K562 (cell line): ENCODE measurements at regions of chr2 and their contacts with region 1.

Region 1: DNA sequence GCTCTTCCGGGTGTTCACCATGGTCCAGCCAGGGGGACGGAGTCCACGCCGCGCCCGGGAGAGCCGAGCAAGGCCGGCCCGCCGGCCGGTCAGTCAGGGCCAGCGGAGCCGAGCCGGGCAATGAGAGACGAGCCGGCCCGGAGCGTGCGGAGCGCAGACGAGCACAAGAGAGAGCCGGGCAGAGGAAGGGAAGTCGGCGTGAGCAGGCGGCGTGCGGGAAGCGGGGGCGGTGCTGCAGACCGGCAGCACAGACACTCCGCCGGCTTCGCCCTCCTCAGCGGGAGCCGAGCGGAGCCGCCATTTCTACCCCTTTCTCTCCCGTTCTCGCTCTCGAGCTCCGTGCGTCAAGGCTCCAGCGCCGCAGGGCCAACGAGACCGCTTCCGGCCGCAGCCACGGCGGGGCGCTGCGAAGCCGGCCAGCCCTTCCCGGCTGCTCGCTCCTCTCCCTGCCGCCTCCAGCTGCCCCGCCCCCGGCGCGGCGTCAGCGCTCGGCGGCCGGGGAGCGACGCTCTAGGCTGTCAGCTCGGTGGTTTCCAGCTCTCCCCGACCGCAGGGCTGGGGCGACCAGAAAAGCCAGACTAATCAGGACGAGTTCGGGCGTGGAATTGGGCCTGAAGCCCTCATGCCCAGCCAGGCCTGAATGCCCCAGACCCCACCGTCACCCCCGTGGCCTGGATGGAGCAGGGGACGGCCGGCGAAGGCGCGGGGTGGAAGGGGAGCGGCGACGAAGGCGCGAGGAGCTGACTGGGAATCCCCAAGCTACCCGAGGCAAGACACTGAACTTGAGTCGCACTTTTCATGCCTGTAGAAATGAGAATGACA is at the start of gene ATAD2B:
- DNase-seq: peak; percentile 94 to 96 (median 94)
- ATAC-seq: peak; percentile 92
- H3K4me3 ChIP-seq: peak within 1 kb of the TSS; percentile 86
- H3K27ac ChIP-seq: peak within 1 kb of the TSS; percentile 96
- H3K4me1 ChIP-seq: peaks cover 3 to 21% of the 10 kb centered on the region in 2 experiments; a peak in 2 of 5 replicates
- H3K27me3 ChIP-seq: no peaks in the 10 kb centered on the region
- CTCF ChIP-seq: peak; percentile 92 to 96 (median 95)
- EP300 ChIP-seq: peak; percentile 37
- POLR2A ChIP-seq: peak; percentile 91
- RAD21 ChIP-seq: peak; percentile 85 to 86
- polyA plus RNA-seq, gene ATAD2B: 3.2 to 4.0 TPM

Region 2: GRCh38 chr2:23824777-23825212 is 102.2 kb before region 1 on chr2:
- CTCF ChIA-PET with region 1: interaction called, 3 read pairs
- POLR2A ChIA-PET with region 1: interaction called, 4 read pairs
- in situ Hi-C with region 1: no loop called
- intact Hi-C with region 1: loop called (anchors 5 kb)
- DNase-seq: peak; percentile 23 to 62 (median 34)
- ATAC-seq: peak; percentile 86
- H3K4me3 ChIP-seq: no peak overlapping the region
- H3K27ac ChIP-seq: no peak overlapping the region
- H3K4me1 ChIP-seq: no peaks in the 10 kb centered on the region
- H3K27me3 ChIP-seq: no peaks in the 10 kb centered on the region
- CTCF ChIP-seq: peak; percentile 54 to 80 (median 71); a peak in 5 of 6 replicates
- EP300 ChIP-seq: no peak
- POLR2A ChIP-seq: no peak
- RAD21 ChIP-seq: peak; percentile 46 to 66

Region 3: DNA sequence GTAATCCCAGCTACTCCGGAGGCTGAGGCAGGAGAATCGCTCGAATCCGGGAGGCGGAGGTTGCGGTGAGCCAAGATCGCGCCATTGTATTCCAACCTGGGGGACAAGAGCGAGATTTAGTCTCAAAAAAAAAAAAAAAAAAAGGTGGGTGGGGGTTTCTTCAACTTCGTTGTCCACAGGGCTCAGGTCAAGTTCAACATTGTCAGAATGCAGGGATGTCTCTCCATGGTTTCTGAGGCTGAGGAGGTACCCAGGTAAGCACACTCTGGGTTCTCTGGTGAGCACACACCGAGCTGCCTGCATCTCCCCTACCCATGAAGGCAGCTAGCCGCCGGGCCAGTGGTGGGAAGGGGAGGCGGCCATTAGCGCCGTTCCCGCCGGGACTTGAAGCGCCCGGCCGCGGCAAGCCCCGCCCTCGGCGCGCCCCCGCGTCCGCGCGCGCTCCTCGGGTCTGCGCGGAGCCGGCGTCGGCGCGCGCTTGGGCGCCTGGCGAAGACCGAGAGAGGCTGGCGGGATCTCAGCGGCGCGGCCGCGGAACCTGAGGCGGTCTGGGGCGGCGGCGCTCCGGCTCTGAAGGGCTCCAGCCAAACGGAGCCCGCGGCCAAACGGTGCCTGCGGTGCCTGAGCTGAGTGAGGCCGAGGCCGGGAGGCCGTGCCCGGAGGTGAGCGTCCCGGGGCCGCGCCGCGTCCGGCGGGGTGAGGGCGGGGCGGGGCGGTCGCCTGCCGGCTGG is 13.2 kb after region 1 on chr2 and contains the start of gene UBXN2A:
- CTCF ChIA-PET with region 1: no interaction called
- POLR2A ChIA-PET with region 1: interaction called, 54 read pairs
- in situ Hi-C with region 1: no loop called
- intact Hi-C with region 1: loop called (anchors 1 kb)
- DNase-seq: peak; percentile 87 to 90 (median 88)
- ATAC-seq: peak; percentile 83
- H3K4me3 ChIP-seq: peak within 1 kb of the TSS; percentile 88
- H3K27ac ChIP-seq: peak within 1 kb of the TSS; percentile 93
- H3K4me1 ChIP-seq: peaks cover 11 to 28% of the 10 kb centered on the region in 2 experiments; a peak in 4 of 5 replicates
- H3K27me3 ChIP-seq: no peaks in the 10 kb centered on the region
- CTCF ChIP-seq: no peak
- EP300 ChIP-seq: no peak
- POLR2A ChIP-seq: peak; percentile 83
- RAD21 ChIP-seq: no peak
- polyA plus RNA-seq, gene UBXN2A: 3.4 to 4.1 TPM

Region 4: DNA sequence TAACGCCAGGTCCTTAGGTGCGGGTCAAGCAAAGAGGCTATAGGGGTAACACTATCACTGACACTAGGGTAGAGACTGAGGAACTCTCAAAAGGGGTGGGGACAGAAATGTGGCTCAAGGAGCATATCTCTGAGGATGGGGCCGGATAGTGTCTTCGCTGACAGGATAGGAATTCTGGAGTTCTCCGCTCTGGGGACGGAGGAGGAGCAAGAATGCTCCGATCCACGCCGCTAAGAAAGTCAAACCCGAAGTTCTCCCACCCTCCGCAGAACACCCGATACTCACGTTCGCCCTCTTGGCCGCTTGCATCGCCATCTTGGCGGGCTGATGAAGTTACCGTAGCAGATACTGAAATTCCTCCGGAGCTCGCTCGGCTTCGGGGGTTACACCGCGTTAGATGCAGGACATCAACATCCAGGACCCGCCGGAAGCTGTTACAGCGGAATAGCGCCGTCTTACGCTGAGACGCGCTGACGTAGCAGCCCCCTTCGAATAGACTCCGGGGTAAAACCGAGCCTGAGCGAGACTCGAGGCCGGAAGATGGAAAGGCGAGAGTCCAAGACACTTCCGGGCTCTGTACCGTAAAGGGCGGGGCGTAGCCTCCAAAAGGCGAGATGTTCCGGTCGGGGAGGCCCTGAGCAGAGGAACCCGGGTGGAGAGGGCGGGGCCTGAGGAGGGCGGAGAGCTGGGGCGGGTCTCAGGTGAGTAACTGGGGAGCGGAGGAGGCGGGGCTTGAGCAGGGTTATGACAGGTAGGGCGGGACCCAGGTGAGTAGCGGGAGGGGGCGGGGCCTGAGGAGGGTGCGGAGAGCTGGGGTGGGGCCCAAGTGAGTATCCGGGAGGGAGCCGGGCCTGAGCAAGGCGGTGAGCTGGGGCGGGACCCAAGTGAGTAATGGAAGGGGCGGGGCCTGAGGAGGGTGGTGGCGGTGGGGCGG is 149.2 kb after region 1 on chr2 and contains the start of gene SF3B6:
- CTCF ChIA-PET with region 1: no interaction called
- POLR2A ChIA-PET with region 1: interaction called, 11 read pairs
- in situ Hi-C with region 1: no loop called
- intact Hi-C with region 1: loop called (anchors 2 kb)
- DNase-seq: peak; percentile 94 to 100 (median 96)
- ATAC-seq: peak; percentile 94
- H3K4me3 ChIP-seq: peak within 1 kb of the TSS; percentile 58
- H3K27ac ChIP-seq: peak within 1 kb of the TSS; percentile 75
- H3K4me1 ChIP-seq: peaks cover 9 to 15% of the 10 kb centered on the region in 2 experiments; a peak in 4 of 5 replicates
- H3K27me3 ChIP-seq: no peaks in the 10 kb centered on the region
- CTCF ChIP-seq: peak in 1 of 3 experiments; percentile 14; a peak in 1 of 6 replicates
- EP300 ChIP-seq: peak; percentile 79
- POLR2A ChIP-seq: peak; percentile 94
- RAD21 ChIP-seq: no peak
- polyA plus RNA-seq, gene SF3B6: 535 to 591 TPM

Region 5: DNA sequence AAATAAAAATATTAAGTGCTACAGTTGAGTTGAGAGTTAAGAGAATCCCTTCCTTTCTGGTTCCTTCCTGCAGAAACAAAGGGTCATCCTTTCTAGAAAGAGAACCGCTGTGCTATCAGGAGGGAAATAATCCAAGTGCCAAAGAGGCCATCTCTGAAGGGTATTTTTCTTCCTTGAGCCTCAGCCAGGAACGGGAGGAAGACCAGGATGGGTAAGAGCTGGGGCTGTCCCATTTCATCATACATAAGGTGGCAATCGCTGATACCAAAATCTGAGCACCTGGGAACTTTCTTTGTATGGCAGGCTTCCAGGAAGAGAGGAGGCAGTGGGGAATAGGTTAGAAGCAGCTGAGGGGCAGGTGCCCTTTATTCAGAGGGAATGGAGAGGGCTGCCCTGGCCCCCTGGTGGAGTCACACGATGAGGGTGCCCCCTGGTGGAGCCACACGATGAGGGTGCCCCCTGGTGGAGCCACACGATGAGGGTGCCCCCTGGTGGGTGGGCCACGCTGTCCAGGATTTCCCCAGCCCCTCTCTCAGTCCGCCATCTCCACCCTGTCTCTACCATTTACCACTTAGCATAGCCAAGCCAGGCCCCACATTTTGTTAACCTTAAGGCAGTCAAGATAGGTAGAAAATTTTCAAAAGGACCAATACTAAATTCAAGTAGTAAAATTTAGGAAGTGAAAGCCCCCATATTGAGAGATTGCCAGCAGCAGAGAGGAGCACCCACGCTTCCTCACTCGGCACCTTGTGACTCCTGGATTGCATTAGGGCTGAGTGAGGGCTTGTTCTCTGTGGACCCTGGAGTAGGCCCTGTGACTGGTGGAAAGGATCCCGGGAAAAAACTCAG is 237.4 kb after region 1 on chr2:
- CTCF ChIA-PET with region 1: interaction called, 7 read pairs
- POLR2A ChIA-PET with region 1: interaction called, 4 read pairs
- in situ Hi-C with region 1: no loop called
- intact Hi-C with region 1: loop called (anchors 1 kb)
- DNase-seq: peak; percentile 58 to 78 (median 69)
- ATAC-seq: peak; percentile 97
- H3K4me3 ChIP-seq: no peak overlapping the region
- H3K27ac ChIP-seq: no peak overlapping the region
- H3K4me1 ChIP-seq: peaks cover 0 to 4% of the 10 kb centered on the region in 2 experiments; a peak in 1 of 5 replicates
- H3K27me3 ChIP-seq: peaks cover 2 to 16% of the 10 kb centered on the region in 2 experiments; a peak in 1 of 5 replicates
- CTCF ChIP-seq: peak; percentile 98 to 99 (median 99)
- EP300 ChIP-seq: no peak; the same call in 1 of the 2 replicates
- POLR2A ChIP-seq: no peak
- RAD21 ChIP-seq: peak; percentile 72 to 91

Region 6: DNA sequence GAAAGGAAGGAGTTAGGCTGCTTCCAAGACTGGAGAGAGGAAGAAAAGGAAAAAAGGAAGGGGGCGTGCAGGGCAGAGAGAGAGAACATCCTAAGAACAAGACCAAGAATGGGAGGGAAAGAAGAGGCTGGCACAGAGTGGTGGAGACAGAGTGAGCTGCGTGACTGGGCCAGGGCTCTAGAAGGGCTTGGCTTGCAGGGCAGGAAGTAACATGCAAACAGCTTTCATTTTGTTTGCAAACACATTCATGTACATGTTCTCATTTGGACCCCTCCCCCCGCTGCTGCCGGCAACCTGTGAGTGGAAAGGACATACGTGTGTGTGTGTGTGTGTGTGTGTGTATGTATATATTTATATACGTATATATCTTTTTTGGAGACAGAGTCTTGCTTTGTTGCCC is 1461.5 kb after region 1 on chr2:
- CTCF ChIA-PET with region 1: no interaction called
- POLR2A ChIA-PET with region 1: no interaction called
- in situ Hi-C with region 1: no loop called
- intact Hi-C with region 1: no loop called
- DNase-seq: no peak
- ATAC-seq: no peak
- H3K4me3 ChIP-seq: no peak overlapping the region
- H3K27ac ChIP-seq: no peak overlapping the region
- H3K4me1 ChIP-seq: no peaks in the 10 kb centered on the region
- H3K27me3 ChIP-seq: peaks cover 35 to 54% of the 10 kb centered on the region in 2 experiments
- CTCF ChIP-seq: no peak
- EP300 ChIP-seq: no peak
- POLR2A ChIP-seq: no peak
- RAD21 ChIP-seq: no peak